ENCODE measurements at regions of chr7 and their contacts with region 1.

Region 1: GRCh38 chr7:100662377-100662776 is 6.1 kb upstream of the ACTL6B start:
- DNase-seq: no peak
- ATAC-seq: no peak
- H3K4me3 ChIP-seq: no peak overlapping the region
- H3K27ac ChIP-seq: no peak overlapping the region
- H3K4me1 ChIP-seq: no peaks in the 10 kb centered on the region
- H3K27me3 ChIP-seq: no peaks in the 10 kb centered on the region
- CTCF ChIP-seq: no peak

Region 2: DNA sequence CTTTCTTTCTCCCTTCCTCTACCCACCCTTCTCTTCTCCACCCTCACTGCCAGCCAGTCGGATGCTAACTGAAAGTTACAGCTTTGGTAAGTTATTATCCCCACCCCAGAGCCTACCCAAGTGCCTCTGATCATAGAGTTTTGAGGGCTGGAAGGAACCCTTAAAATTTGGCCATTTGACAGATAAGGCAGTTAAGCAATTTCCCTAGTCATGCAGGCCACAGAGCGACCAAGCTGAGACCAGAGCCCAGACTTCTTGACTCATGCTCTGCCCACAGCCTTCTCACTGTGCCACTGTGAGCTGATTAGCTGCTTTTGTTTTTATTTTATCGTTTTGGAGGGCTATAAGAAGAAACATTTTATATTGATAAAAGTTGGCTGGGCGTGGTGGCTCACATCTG is 105.8 kb before region 1 on chr7:
- CTCF ChIA-PET with region 1: no interaction called
- POLR2A ChIA-PET with region 1: no interaction called
- intact Hi-C with region 1: no loop called
- DNase-seq: no peak
- ATAC-seq: no peak
- H3K4me3 ChIP-seq: no peak overlapping the region
- H3K27ac ChIP-seq: no peak overlapping the region
- H3K4me1 ChIP-seq: no peaks in the 10 kb centered on the region
- H3K27me3 ChIP-seq: no peaks in the 10 kb centered on the region
- CTCF ChIP-seq: no peak

Region 3: DNA sequence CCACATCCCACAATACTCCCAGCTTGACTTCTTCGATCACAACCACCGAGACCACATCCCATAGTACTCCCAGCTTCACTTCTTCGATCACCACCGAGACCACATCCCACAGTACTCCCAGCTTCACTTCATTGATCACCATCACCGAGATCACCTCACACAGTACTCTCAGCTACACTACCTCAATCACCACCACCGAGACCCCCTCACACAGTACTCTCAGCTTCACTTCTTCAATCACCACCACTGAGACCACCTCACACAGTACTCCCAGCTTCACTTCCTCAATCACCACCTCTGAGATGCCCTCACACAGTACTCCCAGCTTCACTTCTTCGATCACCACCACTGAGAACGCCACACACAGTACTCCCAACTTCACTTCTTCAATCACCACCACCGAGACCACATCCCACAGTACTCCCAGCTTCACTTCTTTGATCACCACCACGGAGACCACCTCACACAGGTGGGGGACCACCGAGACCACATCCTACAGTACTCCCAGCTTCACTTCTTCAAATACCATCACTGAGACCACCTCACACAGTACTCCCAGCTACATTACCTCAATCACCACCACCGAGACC is 295.6 kb after region 1 on chr7:
- CTCF ChIA-PET with region 1: no interaction called
- POLR2A ChIA-PET with region 1: interaction called, 17 read pairs
- intact Hi-C with region 1: no loop called
- DNase-seq: no peak
- ATAC-seq: no peak
- H3K4me3 ChIP-seq: no peak overlapping the region
- H3K27ac ChIP-seq: no peak overlapping the region
- H3K4me1 ChIP-seq: no peaks in the 10 kb centered on the region
- H3K27me3 ChIP-seq: peaks cover 38% of the 10 kb centered on the region
- CTCF ChIP-seq: no peak